ENCODE measurements at regions of chr4 and their contacts with region 1.

Region 1: DNA sequence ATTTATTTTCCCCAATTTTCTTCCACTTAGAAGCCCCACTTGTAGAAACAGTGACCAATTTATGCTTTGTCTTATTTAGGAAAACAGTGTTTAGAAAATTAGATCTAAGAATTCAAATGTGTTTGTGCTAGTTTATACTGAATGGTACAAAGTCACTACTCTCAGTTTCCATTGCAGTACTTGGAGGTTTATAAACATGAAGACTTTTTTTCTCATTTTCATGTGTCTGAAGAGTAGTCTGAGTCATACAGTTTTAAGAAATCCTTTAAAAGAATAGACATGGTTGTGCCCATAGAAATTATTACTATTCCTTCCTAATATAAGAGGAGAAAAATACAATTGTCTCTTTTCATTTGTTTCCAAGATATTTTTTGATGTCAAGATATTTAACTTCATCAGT is 458.7 kb downstream of the NAF1 start:
- DNase-seq: no peak
- ATAC-seq: no peak
- H3K4me3 ChIP-seq: no peak overlapping the region
- H3K27ac ChIP-seq: no peak overlapping the region
- H3K4me1 ChIP-seq: peaks cover 0 to 3% (median 0%) of the 10 kb centered on the region in 9 donors
- H3K27me3 ChIP-seq: no peaks in the 10 kb centered on the region
- CTCF ChIP-seq: no peak

Region 2: GRCh38 chr4:162274354-162274753 is 433.6 kb before region 1 on chr4:
- intact Hi-C with region 1: no loop called
- DNase-seq: no peak
- ATAC-seq: peak in 1 of 8 donors; percentile 53
- H3K4me3 ChIP-seq: no peak overlapping the region
- H3K27ac ChIP-seq: no peak overlapping the region
- H3K4me1 ChIP-seq: no peaks in the 10 kb centered on the region
- H3K27me3 ChIP-seq: no peaks in the 10 kb centered on the region
- CTCF ChIP-seq: no peak

Region 3: GRCh38 chr4:162392947-162393346 is 315.0 kb before region 1 on chr4:
- intact Hi-C with region 1: no loop called
- DNase-seq: no peak
- ATAC-seq: no peak
- H3K4me3 ChIP-seq: no peak overlapping the region
- H3K27ac ChIP-seq: no peak overlapping the region
- H3K4me1 ChIP-seq: no peaks in the 10 kb centered on the region
- H3K27me3 ChIP-seq: no peaks in the 10 kb centered on the region
- CTCF ChIP-seq: no peak

Region 4: GRCh38 chr4:162683659-162684370 is 24.1 kb before region 1 on chr4:
- intact Hi-C with region 1: loop called in 1 of 10 experiments (anchors 1 kb)
- DNase-seq: no peak
- ATAC-seq: no peak
- H3K4me3 ChIP-seq: no peak overlapping the region
- H3K27ac ChIP-seq: no peak overlapping the region
- H3K4me1 ChIP-seq: no peaks in the 10 kb centered on the region
- H3K27me3 ChIP-seq: no peaks in the 10 kb centered on the region
- CTCF ChIP-seq: no peak

Region 5: GRCh38 chr4:162770761-162771490 is 63.0 kb after region 1 on chr4:
- intact Hi-C with region 1: no loop called
- DNase-seq: no peak
- ATAC-seq: no peak
- H3K4me3 ChIP-seq: no peak overlapping the region
- H3K27ac ChIP-seq: no peak overlapping the region
- H3K4me1 ChIP-seq: no peaks in the 10 kb centered on the region
- H3K27me3 ChIP-seq: no peaks in the 10 kb centered on the region
- CTCF ChIP-seq: no peak

Region 6: DNA sequence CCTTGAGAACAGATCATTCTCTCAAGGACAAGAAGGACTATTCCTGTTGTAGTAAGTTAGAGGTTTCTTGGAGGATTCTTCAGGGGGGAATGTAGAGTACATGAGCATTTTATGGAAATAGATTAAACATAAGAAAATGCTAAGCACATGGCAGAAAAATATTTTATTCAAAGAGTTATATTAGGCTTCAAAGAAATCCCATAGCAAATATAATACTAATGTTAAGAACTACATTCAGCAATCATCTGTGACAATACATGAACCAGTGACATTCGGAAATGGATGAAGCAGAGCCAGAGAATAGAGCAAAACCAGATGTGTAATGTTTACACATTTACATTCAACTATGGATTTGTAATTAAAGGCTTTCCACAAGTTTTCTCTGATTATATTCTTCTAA is 170.1 kb after region 1 on chr4:
- intact Hi-C with region 1: no loop called
- DNase-seq: no peak
- ATAC-seq: no peak
- H3K4me3 ChIP-seq: no peak overlapping the region
- H3K27ac ChIP-seq: no peak overlapping the region
- H3K4me1 ChIP-seq: no peaks in the 10 kb centered on the region
- H3K27me3 ChIP-seq: no peaks in the 10 kb centered on the region
- CTCF ChIP-seq: no peak

Measured in heart right ventricle (tissue), 16 donors.